B cell (primary cell): ENCODE measurements at regions of chr15 and their contacts with region 1.

Region 1: GRCh38 chr15:52730173-52730572 is 51.0 kb upstream of the ATOSA start:
- DNase-seq: peak; percentile 80
- ATAC-seq: peak; percentile 97
- H3K4me3 ChIP-seq: no peak overlapping the region
- H3K4me3 Mint-ChIP-seq: peak overlapping the region; percentile 64
- H3K27ac ChIP-seq: peak overlapping the region; percentile 46 to 60
- H3K27ac Mint-ChIP-seq: peak overlapping the region; percentile 91
- H3K4me1 ChIP-seq: peaks cover 26 to 31% of the 10 kb centered on the region in 2 donors
- H3K4me1 Mint-ChIP-seq: peaks cover 31% of the 10 kb centered on the region
- H3K27me3 ChIP-seq: no peaks in the 10 kb centered on the region
- H3K27me3 Mint-ChIP-seq: no peaks in the 10 kb centered on the region
- CTCF ChIP-seq: peak; percentile 49

Region 2: DNA sequence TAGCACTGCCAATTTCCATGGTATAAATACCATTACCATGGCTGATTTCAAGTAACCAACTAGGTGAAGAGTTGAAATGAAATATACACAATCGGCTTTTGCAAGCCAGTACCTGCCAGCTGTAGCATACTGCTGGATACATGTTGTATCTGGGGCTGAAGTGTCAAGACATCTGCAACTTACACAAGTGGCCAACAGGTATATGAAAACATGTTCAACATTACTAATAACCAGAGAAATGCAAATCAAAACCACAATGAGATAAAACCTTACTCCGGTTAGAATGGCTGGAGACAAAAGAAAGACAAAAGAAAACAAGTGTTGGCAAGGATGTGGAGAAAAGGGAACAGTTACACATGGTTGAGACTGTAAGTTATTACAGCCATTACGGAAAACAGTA is 62.6 kb before region 1 on chr15:
- CTCF ChIA-PET with region 1: interaction called, 94 read pairs
- POLR2A ChIA-PET with region 1: interaction called, 6 read pairs
- intact Hi-C with region 1: no loop called
- DNase-seq: no peak
- ATAC-seq: no peak
- H3K4me3 ChIP-seq: no peak overlapping the region
- H3K4me3 Mint-ChIP-seq: no peak overlapping the region
- H3K27ac ChIP-seq: peak overlapping the region in 1 of 2 donors; percentile 7
- H3K27ac Mint-ChIP-seq: no peak overlapping the region
- H3K4me1 ChIP-seq: no peaks in the 10 kb centered on the region
- H3K4me1 Mint-ChIP-seq: peaks cover 23% of the 10 kb centered on the region
- H3K27me3 ChIP-seq: no peaks in the 10 kb centered on the region
- H3K27me3 Mint-ChIP-seq: no peaks in the 10 kb centered on the region
- CTCF ChIP-seq: no peak

Region 3: GRCh38 chr15:52709190-52709981 is 20.8 kb before region 1 on chr15:
- CTCF ChIA-PET with region 1: interaction called, 7 read pairs
- POLR2A ChIA-PET with region 1: interaction called, 5 read pairs
- intact Hi-C with region 1: loop called (anchors 1 kb)
- DNase-seq: peak; percentile 73
- ATAC-seq: peak; percentile 100
- H3K4me3 ChIP-seq: peak overlapping the region; percentile 6 to 57 (median 52)
- H3K4me3 Mint-ChIP-seq: peak overlapping the region; percentile 94
- H3K27ac ChIP-seq: peak overlapping the region; percentile 83 to 87
- H3K27ac Mint-ChIP-seq: peak overlapping the region; percentile 93
- H3K4me1 ChIP-seq: peaks cover 23 to 35% of the 10 kb centered on the region in 2 donors
- H3K4me1 Mint-ChIP-seq: peaks cover 54% of the 10 kb centered on the region
- H3K27me3 ChIP-seq: no peaks in the 10 kb centered on the region
- H3K27me3 Mint-ChIP-seq: no peaks in the 10 kb centered on the region
- CTCF ChIP-seq: no peak